Activated CD4-positive, alpha-beta memory T cell treated with anti-CD3 and anti-CD28 coated beads for 36 hours (primary cell): ENCODE measurements at regions of chr6 and their contacts with region 1.

Region 1: DNA sequence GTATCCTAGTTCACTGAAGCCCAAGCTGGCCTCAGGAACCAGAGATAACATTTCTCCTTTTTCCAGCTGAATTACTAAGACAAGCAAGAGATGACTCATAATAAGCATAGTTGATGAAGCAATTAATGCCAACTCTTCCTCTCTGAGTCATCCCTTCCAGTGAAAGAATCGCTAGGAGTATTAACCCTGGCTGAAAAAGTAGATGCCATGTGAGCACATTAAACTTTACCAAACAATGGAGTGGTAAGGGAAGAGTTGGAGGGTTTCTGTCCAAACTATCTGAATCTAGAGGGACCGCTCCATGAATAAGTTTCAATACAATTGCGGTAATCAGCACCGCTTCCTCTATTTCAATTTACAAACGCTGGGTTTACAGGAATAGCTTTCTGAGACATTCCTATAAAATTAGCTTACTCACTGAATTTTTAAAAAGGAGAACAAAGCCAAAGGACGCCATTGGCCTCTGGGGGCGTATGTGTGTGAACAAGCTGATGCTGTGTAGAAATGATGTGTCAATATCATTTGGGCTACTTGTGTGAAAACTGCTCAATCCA is 48.3 kb downstream of the ATXN1 start:
- DNase-seq: peak; percentile 62
- H3K4me3 Mint-ChIP-seq: peak overlapping the region; percentile 64
- H3K27ac Mint-ChIP-seq: peak overlapping the region; percentile 92
- H3K4me1 Mint-ChIP-seq: peaks cover 70% of the 10 kb centered on the region
- H3K27me3 Mint-ChIP-seq: no peaks in the 10 kb centered on the region

Region 2: GRCh38 chr6:16409531-16410441 is 303.2 kb before region 1 on chr6:
- CTCF ChIA-PET with region 1: no interaction called
- POLR2A ChIA-PET with region 1: no interaction called
- intact Hi-C with region 1: no loop called
- DNase-seq: peak; percentile 82
- H3K4me3 Mint-ChIP-seq: peak overlapping the region; percentile 71
- H3K27ac Mint-ChIP-seq: peak overlapping the region; percentile 81
- H3K4me1 Mint-ChIP-seq: peaks cover 66% of the 10 kb centered on the region
- H3K27me3 Mint-ChIP-seq: no peaks in the 10 kb centered on the region

Region 3: DNA sequence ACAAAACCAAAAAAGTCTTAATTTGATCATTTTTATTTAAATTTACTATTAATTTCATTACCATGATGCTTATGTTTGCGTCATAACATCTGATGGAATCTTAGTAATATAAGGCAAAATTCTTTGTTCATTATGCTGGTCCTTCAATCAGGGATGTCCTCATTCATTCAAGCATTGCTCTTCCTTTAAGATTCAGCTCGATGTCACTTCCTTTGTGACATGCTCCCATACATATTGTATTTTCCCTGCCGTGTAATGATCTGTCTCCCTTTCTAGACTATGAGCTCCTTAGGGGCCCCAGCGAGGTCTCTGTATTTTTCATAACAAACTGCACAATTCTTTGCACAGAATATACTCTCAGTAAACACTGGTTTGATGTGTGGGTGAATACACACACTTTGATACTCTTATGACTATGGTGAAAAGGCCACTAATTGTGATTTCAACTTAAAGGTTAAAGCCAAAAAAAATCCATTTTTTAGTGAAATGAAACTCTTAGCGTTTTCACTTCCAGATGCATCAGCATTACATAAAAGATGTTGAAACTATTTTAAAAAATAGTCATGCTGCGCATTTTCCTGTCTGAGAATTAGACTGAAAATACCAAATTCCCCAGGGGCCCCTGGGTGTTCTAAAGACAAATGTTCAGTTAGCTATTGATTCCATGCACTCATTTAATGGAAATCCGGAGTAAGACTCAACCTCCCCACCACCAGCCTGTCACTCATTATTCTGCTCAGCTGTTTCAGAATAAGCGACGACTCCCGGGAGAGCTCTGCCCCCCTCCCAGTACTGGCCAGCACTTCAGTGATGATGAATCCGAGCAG is 121.4 kb before region 1 on chr6:
- CTCF ChIA-PET with region 1: no interaction called
- POLR2A ChIA-PET with region 1: interaction called, 4 read pairs
- intact Hi-C with region 1: loop called (anchors 5 kb)
- DNase-seq: peak; percentile 72
- H3K4me3 Mint-ChIP-seq: peak overlapping the region; percentile 39
- H3K27ac Mint-ChIP-seq: peak overlapping the region; percentile 78
- H3K4me1 Mint-ChIP-seq: peaks cover 43% of the 10 kb centered on the region
- H3K27me3 Mint-ChIP-seq: no peaks in the 10 kb centered on the region

Region 4: DNA sequence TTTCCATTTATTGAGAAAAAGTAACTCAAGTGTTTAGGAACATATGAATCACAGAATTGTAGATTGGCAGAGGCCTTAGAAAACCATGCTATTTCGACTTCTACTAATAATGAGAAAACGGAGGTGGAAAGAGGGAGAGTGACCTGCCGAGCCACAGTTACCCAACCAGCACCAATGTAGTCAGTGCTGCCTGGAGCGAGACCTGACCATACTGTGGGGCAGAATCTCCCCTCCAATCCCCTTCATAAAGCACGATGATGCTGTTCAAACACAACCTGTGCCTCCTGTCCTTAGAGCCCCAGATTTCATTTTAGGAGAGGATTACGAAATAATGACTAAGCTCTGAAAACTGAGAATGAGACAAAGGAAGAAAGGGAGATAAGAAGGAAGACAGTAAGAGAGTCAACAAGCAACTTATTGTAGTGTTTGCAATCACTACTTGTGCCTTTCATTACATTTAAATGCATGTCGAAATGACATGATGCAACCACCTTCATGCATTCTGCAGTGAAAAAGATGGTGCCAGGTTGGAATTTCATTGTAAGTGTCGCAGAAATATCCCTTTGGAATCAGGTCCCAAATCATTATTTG is 22.3 kb before region 1 on chr6:
- CTCF ChIA-PET with region 1: interaction called, 4 read pairs
- POLR2A ChIA-PET with region 1: interaction called, 5 read pairs
- intact Hi-C with region 1: loop called (anchors 1 kb)
- DNase-seq: peak; percentile 82
- H3K4me3 Mint-ChIP-seq: peak overlapping the region; percentile 51
- H3K27ac Mint-ChIP-seq: peak overlapping the region; percentile 90
- H3K4me1 Mint-ChIP-seq: peaks cover 93% of the 10 kb centered on the region
- H3K27me3 Mint-ChIP-seq: no peaks in the 10 kb centered on the region

Region 5: DNA sequence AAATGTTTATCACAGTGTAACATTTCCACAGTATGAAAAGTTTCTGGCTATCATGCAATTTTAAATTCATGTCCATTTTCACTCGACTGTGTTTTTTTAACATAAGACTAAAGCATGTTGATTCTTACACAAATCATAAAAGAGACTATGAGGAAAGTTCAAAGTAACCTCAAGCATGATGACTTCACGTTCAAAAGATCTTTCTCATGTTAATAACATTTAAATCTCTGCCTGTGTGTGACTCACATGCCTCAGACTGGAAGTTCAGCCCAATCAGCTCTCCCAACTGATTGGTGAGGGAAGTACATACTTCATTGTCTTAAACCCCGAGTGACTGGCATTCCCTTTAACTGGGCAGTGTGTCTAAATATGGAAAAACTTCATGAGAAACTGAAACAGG is 10.8 kb after region 1 on chr6:
- CTCF ChIA-PET with region 1: interaction called, 4 read pairs
- POLR2A ChIA-PET with region 1: interaction called, 10 read pairs
- intact Hi-C with region 1: loop called (anchors 1 kb)
- DNase-seq: no peak
- H3K4me3 Mint-ChIP-seq: no peak overlapping the region
- H3K27ac Mint-ChIP-seq: no peak overlapping the region
- H3K4me1 Mint-ChIP-seq: peaks cover 59% of the 10 kb centered on the region
- H3K27me3 Mint-ChIP-seq: no peaks in the 10 kb centered on the region

Region 6: DNA sequence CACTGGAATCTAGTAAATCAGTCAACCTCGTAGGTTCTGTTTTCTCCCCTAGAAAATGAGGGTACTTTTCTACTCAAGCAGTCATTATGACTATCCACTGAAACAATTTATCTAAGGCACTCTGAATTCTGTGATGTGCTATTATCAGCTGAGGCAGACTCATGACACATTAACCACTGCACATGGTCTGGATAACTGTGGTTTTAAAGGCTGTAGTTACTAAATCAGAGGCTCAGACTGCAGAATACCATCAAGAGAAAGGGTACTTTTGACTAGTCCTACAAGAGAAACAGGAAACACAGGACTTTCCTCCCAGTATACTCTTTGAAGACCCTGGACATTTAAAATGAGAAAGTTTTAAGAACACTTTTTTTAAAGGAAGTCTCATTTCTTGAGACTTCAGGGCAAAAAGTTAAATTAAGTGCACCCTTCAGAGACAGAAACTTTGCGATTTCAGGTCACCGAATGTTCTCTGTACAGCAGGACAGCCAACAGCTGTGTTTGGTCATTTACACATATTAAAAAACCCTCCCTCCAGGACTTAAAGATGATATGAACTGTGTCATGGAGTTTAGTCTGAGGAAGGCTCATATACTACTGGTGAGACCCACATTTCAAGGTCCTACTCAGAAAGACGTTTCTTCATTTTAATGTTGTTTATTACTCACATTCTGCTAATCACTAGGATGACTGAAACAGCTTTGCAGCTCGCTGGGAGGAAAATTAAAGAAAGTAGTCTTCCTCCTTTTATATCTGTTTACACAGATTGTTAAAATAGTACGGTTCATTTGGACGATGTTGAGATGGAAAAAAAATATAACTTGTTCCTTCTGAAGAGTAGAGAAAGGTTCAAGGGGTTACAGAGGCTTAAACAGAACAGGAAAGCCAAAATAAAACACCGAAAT is 28.4 kb after region 1 on chr6:
- CTCF ChIA-PET with region 1: interaction called, 5 read pairs
- POLR2A ChIA-PET with region 1: interaction called, 5 read pairs
- intact Hi-C with region 1: loop called (anchors 1 kb)
- DNase-seq: no peak
- H3K4me3 Mint-ChIP-seq: no peak overlapping the region
- H3K27ac Mint-ChIP-seq: peak overlapping the region; percentile 25
- H3K4me1 Mint-ChIP-seq: peaks cover 77% of the 10 kb centered on the region
- H3K27me3 Mint-ChIP-seq: no peaks in the 10 kb centered on the region

Region 7: DNA sequence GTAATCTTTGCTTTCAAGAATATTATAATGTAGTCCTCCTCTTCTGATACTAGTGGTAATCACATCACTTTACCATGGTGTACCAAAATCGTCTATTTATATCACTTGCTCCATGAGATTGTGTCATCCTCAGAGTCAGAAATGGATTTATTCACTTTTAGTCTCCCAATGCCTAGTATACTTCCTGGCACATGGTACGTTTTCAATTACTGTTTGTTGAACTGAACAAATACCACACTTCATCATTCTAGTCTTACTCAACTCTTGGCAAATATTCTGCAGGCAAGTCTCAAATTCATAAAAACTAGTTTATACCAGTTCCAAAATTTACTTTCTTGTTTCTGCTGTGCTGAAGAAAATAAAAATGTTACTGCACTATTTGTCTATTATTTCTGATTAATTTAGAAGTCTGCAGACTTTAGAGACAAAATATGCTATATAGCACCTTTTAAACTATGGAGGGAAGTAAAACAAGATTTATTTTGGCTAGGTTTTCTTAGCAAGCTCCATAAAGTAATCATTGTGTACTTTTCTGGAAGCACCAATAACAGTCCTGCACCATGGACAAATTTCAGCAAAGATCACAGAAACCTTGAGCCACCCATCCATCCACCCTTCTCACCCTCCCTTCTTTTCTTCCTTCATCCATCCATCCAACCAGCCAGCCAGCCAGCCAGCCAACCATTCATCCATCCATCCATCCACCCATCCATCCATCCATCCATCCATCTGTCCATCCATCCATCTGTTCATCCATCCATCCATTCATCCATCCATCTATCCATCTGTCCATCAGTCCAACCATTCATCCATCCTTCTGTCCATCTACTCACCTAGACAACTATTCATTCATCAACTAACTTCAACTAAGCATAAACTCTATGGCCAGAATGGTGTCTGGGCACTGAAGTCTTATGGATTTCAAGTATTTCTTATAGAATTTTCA is 286.8 kb after region 1 on chr6:
- CTCF ChIA-PET with region 1: no interaction called
- POLR2A ChIA-PET with region 1: no interaction called
- intact Hi-C with region 1: no loop called
- DNase-seq: no peak
- H3K4me3 Mint-ChIP-seq: no peak overlapping the region
- H3K27ac Mint-ChIP-seq: no peak overlapping the region
- H3K4me1 Mint-ChIP-seq: no peaks in the 10 kb centered on the region
- H3K27me3 Mint-ChIP-seq: peaks cover 55% of the 10 kb centered on the region